ENCODE measurements at regions of chr20 and their contacts with region 1.

Region 1: GRCh38 chr20:62065669-62066338 is at the start of gene TAF4:
- DNase-seq: peak; percentile 69
- H3K4me3 Mint-ChIP-seq: peak within 1 kb of the TSS; percentile 84
- H3K27ac Mint-ChIP-seq: peak within 1 kb of the TSS; percentile 90
- H3K4me1 Mint-ChIP-seq: peaks cover 49% of the 10 kb centered on the region
- H3K27me3 Mint-ChIP-seq: no peaks in the 10 kb centered on the region
- total RNA-seq, gene TAF4: 15.0 to 15.4 TPM

Region 2: DNA sequence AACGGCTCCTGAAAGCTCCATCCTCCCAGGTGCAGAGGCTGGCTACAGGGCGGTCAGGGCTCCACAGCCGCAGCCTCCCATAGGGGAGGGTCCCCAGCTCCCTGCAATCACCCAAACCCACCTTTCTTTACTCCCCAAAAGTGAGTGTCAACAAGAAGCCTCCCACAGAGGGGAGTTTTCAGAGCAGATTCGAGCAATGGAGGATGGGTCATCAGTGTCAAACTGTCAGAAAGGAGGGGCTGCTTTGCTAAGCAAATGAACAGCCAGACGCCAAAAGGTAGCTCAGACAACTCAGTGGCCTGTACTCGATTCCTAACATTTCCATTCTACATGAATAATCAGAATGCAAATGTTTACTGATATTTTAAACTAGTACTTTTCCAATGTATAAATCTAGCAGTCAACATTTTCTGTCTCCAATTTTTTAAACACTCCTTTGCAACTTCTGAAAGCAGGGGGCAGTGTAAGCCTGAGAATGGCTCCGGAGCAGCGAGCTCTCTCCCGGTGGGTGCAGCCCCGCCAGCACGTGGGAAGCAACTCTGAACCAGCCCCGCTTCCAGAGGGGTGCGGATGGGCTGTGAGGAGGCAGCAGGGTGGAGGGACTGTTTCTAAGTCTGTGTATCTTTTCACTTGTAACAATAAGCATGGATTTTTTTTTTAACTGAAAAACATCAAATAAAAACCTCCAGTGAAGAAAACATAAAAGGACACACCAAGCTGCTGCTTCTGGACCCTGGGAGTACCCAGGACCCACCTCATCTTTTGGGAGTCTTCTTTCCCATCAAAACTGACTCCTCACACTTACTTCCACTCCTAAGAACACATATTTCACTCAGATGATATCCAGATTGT is 55.0 kb before region 1 on chr20:
- CTCF ChIA-PET with region 1: interaction called, 3 read pairs
- intact Hi-C with region 1: loop called (anchors 2 kb)
- DNase-seq: peak; percentile 75
- H3K4me3 Mint-ChIP-seq: no peak overlapping the region
- H3K27ac Mint-ChIP-seq: peak overlapping the region; percentile 25
- H3K4me1 Mint-ChIP-seq: peaks cover 8% of the 10 kb centered on the region
- H3K27me3 Mint-ChIP-seq: no peaks in the 10 kb centered on the region

Region 3: DNA sequence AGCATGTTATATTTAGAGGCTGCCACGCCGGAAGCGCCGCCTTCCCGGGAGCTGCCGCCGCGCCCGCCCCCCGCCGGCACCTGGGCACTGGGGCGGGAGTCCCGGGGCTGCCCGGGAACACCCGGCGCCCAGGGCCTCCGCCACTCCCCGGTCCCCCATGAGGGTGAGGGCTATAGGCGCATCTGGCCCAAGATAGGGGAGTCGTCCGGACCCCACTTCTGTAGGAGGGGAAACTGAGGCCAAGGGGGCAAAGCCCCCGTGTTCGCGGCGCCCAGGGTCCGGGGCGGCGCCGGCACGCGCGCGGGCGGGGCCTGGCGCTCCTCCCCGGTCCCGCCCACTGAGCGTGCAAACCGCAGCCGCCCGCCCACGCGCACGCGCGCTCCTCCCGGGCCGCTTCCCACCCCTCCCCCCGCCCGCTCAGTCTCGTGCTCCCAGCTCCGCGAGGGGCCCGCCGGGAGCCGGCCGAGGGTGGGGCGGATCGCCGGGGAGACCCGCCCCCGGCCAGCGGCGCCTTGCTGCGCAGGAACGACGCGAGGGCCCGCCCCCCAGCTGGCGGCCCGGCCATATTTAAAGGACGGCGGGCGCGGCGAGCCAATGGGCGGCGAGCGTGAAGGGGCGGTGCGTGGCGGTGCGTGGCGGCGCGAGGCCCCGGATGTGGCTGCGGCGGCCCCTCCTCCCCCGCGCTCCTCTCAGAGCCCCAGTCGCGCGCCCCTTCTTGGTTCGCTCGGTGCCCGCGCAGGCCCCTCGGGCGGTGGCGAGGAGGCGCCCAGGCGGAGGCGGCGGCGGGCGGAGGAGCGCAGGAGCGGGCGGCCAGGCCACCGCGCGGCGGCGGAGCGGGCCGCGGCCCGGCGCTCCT is 56.2 kb after region 1 on chr20 and contains the start of gene LSM14B:
- CTCF ChIA-PET with region 1: interaction called, 3 read pairs
- intact Hi-C with region 1: loop called (anchors 1 kb)
- DNase-seq: peak; percentile 95
- H3K4me3 Mint-ChIP-seq: peak within 1 kb of the TSS; percentile 87
- H3K27ac Mint-ChIP-seq: peak within 1 kb of the TSS; percentile 92
- H3K4me1 Mint-ChIP-seq: peaks cover 54% of the 10 kb centered on the region
- H3K27me3 Mint-ChIP-seq: no peaks in the 10 kb centered on the region
- total RNA-seq, gene LSM14B: 29.6 to 33.3 TPM

Region 4: GRCh38 chr20:62143118-62143973 is 77.5 kb after region 1 on chr20 and contains the starts of genes PSMA7 and SS18L1:
- CTCF ChIA-PET with region 1: interaction called, 3 read pairs
- intact Hi-C with region 1: loop called (anchors 1 kb)
- DNase-seq: peak; percentile 82
- H3K4me3 Mint-ChIP-seq: peak within 1 kb of the TSS; percentile 83
- H3K27ac Mint-ChIP-seq: peak within 1 kb of the TSS; percentile 87
- H3K4me1 Mint-ChIP-seq: peaks cover 55% of the 10 kb centered on the region
- H3K27me3 Mint-ChIP-seq: no peaks in the 10 kb centered on the region
- total RNA-seq, gene PSMA7: 287 to 288 TPM
- total RNA-seq, gene SS18L1: 14.5 to 18.0 TPM

Region 5: GRCh38 chr20:62237801-62238571 is 172.2 kb after region 1 on chr20 and contains the start of gene OSBPL2:
- CTCF ChIA-PET with region 1: no interaction called
- intact Hi-C with region 1: loop called (anchors 1 kb)
- DNase-seq: peak; percentile 100
- H3K4me3 Mint-ChIP-seq: peak within 1 kb of the TSS; percentile 78
- H3K27ac Mint-ChIP-seq: peak within 1 kb of the TSS; percentile 79
- H3K4me1 Mint-ChIP-seq: peaks cover 28% of the 10 kb centered on the region
- H3K27me3 Mint-ChIP-seq: no peaks in the 10 kb centered on the region
- total RNA-seq, gene OSBPL2: 23.6 to 24.7 TPM